Heart right ventricle (tissue), 16 donors: ENCODE measurements at regions of chr18 and their contacts with region 1.

Region 1: GRCh38 chr18:3593904-3594661 is 144.1 kb downstream of the TGIF1 start:
- DNase-seq: peak; percentile 71 to 93
- ATAC-seq: peak; percentile 87 to 93 (median 89)
- H3K4me3 ChIP-seq: peak overlapping the region; percentile 16 to 71 (median 54)
- H3K27ac ChIP-seq: peak overlapping the region; percentile 93 to 99 (median 97)
- H3K4me1 ChIP-seq: peaks cover 14 to 60% (median 44%) of the 10 kb centered on the region in 9 donors
- H3K27me3 ChIP-seq: no peaks in the 10 kb centered on the region
- CTCF ChIP-seq: peak; percentile 75 to 88 (median 86)

Region 2: GRCh38 chr18:3261371-3262246 is 332.5 kb before region 1 on chr18 and contains the start of gene MYL12B:
- intact Hi-C with region 1: loop called in 1 of 10 experiments (anchors 5 kb)
- DNase-seq: peak; percentile 82 to 85
- ATAC-seq: peak; percentile 67 to 93 (median 82)
- H3K4me3 ChIP-seq: peak within 1 kb of the TSS; percentile 73 to 96 (median 87)
- H3K27ac ChIP-seq: peak within 1 kb of the TSS; percentile 96 to 100 (median 98)
- H3K4me1 ChIP-seq: peaks cover 4 to 80% (median 57%) of the 10 kb centered on the region in 9 donors
- H3K27me3 ChIP-seq: no peaks in the 10 kb centered on the region
- CTCF ChIP-seq: peak in 3 of 9 donors; percentile 8 to 24 (median 24)
- total RNA-seq, gene MYL12B: 153 to 241 (median 190) TPM

Region 3: DNA sequence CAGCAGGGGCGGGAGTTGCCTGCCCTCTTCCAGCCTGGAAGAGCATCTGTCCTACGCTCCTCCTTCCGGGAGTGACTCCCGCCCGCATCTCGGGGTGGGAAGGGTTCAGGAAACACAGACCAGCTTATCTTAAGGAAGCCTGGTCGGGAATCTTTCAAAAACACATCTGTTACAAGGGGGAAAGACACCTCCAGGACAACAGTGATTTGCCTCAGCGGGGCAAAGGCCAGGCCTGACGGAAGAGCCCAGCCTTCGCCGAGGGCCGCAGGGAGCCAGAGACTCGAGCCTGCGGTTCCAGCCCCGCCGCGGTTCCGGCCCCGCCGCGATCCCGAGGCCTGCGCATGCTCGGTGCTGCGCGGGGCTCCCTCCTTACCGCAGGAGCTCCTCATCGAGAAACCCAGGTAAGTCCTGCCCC is 182.2 kb before region 1 on chr18:
- intact Hi-C with region 1: no loop called
- DNase-seq: peak; percentile 5 to 38
- ATAC-seq: peak in 6 of 8 donors; percentile 44 to 72 (median 60)
- H3K4me3 ChIP-seq: peak overlapping the region in 9 of 10 donors; percentile 26 to 50 (median 46)
- H3K27ac ChIP-seq: no peak overlapping the region
- H3K4me1 ChIP-seq: no peaks in the 10 kb centered on the region
- H3K27me3 ChIP-seq: peaks cover 0 to 13% (median 6%) of the 10 kb centered on the region in 7 donors
- CTCF ChIP-seq: no peak

Region 4: DNA sequence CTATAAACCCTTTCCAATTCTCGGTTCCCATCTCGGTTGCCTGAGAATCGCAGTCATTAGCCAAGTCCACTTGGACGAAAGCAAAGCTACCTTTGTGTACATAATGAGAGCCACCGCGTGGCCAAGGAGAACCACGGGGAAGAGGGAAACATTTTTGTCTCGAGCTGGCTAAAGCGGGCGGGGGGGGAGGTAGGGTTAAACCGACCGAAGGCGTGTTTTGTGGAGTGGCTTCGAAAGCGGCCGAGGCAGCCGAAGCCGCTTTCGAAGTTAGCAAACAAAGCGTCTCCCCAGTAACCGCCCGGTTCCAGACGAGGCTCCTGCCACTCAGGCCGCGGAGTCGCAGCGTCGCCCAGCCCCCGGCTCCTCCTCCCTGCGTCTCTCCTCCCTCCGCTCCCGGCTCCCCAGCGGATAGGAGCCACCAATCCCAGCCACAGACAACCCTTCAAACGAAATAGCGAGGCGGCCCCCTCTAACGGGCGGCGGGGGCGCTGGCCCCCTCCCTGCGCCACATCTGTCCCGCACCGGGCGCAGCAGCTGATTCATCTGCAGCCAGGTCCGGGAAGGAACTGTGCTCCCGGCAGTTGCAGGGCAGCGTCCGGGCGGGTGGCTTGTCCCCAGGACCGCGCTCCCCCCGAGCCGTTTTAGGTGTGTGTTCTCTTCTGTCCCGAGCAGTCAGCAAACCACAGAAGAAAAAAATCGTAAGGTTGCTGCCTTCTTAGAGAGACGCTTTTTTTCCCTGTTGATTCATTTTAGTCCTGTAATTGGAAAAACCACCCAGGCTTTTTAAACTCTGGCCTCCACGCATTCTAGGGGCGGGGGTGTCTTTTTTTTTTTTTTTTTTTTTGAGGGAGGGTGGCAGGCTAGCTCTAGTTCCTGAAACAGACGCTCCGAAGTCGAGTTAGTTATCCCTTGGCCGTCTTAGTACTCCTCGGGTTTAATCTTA is 145.9 kb before region 1 on chr18:
- intact Hi-C with region 1: loop called in 9 of 10 experiments (anchors 2 to 10 kb)
- DNase-seq: peak; percentile 94 to 96
- ATAC-seq: peak; percentile 79 to 91 (median 86)
- H3K4me3 ChIP-seq: peak overlapping the region; percentile 62 to 97 (median 81)
- H3K27ac ChIP-seq: peak overlapping the region; percentile 87 to 100 (median 97)
- H3K4me1 ChIP-seq: peaks cover 0 to 29% (median 17%) of the 10 kb centered on the region in 9 donors
- H3K27me3 ChIP-seq: no peaks in the 10 kb centered on the region
- CTCF ChIP-seq: peak in 3 of 9 donors; percentile 3 to 22 (median 6)

Region 5: DNA sequence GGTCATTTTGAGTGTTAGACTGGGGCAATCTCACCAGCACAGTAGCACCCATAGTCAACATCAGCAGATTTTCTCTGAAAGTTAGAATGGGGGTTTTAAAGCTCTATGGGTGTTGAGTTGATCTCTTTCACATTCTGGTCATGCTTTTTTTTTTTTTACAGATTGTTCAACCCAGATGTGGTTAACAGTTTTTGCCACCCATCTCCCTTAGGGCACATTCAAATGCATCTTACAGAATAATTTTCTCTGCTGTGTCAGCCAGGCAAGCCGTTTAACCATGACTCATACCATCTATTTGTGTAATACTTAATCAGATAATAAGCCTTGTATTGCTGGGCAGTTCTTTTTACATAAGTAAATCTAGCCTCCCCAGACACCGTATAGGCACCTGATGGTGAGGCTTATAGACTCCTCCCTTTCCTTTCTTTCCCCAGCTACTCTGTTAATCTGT is 82.1 kb before region 1 on chr18:
- intact Hi-C with region 1: no loop called
- DNase-seq: no peak
- ATAC-seq: peak in 1 of 8 donors; percentile 15
- H3K4me3 ChIP-seq: no peak overlapping the region
- H3K27ac ChIP-seq: no peak overlapping the region
- H3K4me1 ChIP-seq: peaks cover 0 to 9% (median 0%) of the 10 kb centered on the region in 9 donors
- H3K27me3 ChIP-seq: no peaks in the 10 kb centered on the region
- CTCF ChIP-seq: no peak

Region 6: GRCh38 chr18:3604498-3605408 is 10.7 kb after region 1 on chr18:
- intact Hi-C with region 1: loop called in 1 of 10 experiments (anchors 1 kb)
- DNase-seq: no peak
- ATAC-seq: peak; percentile 6 to 66 (median 52)
- H3K4me3 ChIP-seq: peak overlapping the region in 9 of 10 donors; percentile 0 to 58 (median 48)
- H3K27ac ChIP-seq: peak overlapping the region; percentile 71 to 92 (median 88)
- H3K4me1 ChIP-seq: peaks cover 15 to 52% (median 29%) of the 10 kb centered on the region in 9 donors
- H3K27me3 ChIP-seq: no peaks in the 10 kb centered on the region
- CTCF ChIP-seq: no peak

Region 7: GRCh38 chr18:3634250-3634939 is 40.3 kb after region 1 on chr18:
- intact Hi-C with region 1: no loop called
- DNase-seq: no peak
- ATAC-seq: no peak
- H3K4me3 ChIP-seq: no peak overlapping the region
- H3K27ac ChIP-seq: no peak overlapping the region
- H3K4me1 ChIP-seq: no peaks in the 10 kb centered on the region
- H3K27me3 ChIP-seq: no peaks in the 10 kb centered on the region
- CTCF ChIP-seq: no peak

Region 8: DNA sequence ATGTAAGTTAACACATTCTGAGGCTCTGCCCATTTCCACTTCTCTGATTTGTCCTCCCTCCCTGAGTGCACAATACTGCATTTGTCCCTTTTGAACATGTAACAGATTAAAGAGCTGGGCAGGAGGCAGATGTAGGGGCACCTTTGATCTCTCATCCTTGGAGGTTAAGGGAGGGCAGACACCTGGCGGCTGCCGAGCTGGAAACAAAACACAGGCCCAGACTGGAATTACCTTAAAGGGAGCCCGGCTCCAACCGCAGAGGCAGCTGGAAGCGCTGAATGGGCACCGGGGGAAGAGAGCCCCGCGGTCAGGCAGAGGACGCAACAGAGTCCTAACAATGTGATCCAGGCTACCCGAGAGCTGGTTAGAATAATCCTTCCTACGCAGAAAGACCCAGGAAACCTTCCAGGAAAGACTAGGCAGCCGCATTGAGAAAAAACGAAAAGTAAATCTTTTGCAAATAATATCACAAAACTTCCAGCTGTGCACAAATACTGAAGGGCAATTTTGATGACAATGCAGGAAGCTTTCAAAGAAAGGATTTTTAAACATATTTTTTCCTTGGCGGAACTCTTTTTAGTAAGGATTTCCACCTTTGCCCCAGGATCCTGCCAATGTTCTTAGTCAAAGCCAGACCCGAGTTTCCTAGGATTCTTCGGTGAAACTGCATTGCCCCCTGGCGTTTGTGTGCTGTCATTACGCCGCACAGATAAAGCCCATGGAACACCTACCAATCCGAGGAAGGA is 71.9 kb after region 1 on chr18:
- intact Hi-C with region 1: loop called (anchors 2 to 5 kb)
- DNase-seq: peak; percentile 77 to 86
- ATAC-seq: peak; percentile 88 to 97 (median 94)
- H3K4me3 ChIP-seq: peak overlapping the region in 8 of 10 donors; percentile 10 to 41 (median 38)
- H3K27ac ChIP-seq: peak overlapping the region in 9 of 10 donors; percentile 41 to 83 (median 69)
- H3K4me1 ChIP-seq: peaks cover 0 to 34% (median 8%) of the 10 kb centered on the region in 9 donors
- H3K27me3 ChIP-seq: no peaks in the 10 kb centered on the region
- CTCF ChIP-seq: peak; percentile 86 to 95 (median 94)

Region 9: DNA sequence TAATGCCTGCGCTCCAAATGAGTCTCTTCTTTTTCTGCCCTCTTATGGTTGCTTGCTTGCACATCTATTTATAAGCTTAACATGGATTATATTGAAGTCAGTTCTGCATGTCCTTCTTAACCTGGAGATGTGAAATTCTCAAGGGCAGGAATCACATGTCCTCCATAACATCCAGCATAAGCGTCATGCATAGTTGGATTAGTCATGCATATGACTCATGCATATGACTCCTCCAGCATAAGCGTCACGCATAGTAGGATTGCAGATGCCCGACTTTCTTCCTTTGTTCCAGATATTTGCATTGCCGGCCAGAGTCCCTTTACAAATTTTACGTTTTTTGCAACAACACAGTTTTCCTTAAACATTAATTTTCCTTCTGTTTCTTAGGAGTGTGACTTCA is 164.4 kb after region 1 on chr18:
- intact Hi-C with region 1: no loop called
- DNase-seq: no peak
- ATAC-seq: no peak
- H3K4me3 ChIP-seq: no peak overlapping the region
- H3K27ac ChIP-seq: no peak overlapping the region
- H3K4me1 ChIP-seq: peaks cover 0 to 8% (median 0%) of the 10 kb centered on the region in 9 donors
- H3K27me3 ChIP-seq: no peaks in the 10 kb centered on the region
- CTCF ChIP-seq: no peak